CD14-positive monocyte (primary cell): ENCODE measurements at regions of chr16 and their contacts with region 1.

Region 1: DNA sequence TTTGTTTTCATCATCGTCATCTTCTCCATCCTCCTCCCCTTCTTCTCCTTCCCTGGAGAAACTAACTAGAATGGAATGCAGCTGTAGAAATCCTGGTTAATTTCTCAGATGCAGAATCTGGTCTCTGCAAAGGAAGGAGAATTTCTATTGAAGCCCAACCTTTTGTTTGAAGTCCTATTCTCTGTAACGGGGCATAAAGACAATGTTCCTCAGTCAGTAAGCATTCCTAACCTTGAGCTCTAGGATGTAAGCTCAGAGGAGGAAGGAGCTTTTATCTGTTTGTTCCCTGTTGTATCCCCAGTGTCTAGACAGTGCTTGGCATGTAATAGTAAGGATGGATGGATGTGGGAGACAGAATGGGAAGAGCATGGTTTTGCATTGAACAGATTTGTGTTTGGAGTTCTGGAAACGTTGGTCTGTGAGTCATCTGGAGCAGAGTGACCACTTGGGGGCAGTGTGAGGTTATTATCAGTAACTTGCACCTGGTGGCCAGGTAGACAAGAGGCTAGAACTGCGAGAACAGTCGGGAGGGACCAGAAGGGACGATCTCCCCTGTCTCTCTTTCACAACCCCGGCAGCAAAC is 363.7 kb downstream of the SNX29 start:
- DNase-seq: no peak
- H3K4me3 ChIP-seq: no peak overlapping the region
- H3K4me3 Mint-ChIP-seq: no peak overlapping the region
- H3K27ac ChIP-seq: no peak overlapping the region
- H3K27ac Mint-ChIP-seq: no peak overlapping the region
- H3K4me1 ChIP-seq: peaks cover 5 to 7% of the 10 kb centered on the region in 2 donors
- H3K4me1 Mint-ChIP-seq: peaks cover 12% of the 10 kb centered on the region
- H3K27me3 ChIP-seq: no peaks in the 10 kb centered on the region
- H3K27me3 Mint-ChIP-seq: peaks cover 0 to 1% (median 0%) of the 10 kb centered on the region in 3 donors
- CTCF ChIP-seq: peak; percentile 8

Region 2: DNA sequence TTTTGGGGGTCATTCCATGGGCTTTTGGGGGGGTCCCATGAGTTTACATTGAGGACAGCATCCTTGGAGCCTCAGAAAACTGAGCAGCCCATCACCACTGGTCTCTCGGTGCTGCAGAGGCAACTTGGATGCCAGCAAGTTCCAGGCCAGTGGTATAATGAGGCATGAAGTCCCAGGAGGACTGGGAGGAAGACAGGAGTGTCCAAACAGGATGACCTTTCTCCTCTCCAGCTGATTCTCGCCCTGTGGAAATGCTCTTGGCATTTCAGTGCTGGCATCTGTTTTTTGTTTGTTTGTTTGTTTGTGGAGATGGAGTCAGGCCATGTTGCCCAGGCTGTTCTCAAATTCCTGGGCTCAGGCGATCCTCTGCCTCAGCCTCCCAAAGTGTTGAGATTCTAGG is 16.1 kb before region 1 on chr16:
- intact Hi-C with region 1: loop called in 1 of 2 experiments (anchors 1 kb)
- DNase-seq: no peak
- H3K4me3 ChIP-seq: no peak overlapping the region
- H3K4me3 Mint-ChIP-seq: no peak overlapping the region
- H3K27ac ChIP-seq: no peak overlapping the region
- H3K27ac Mint-ChIP-seq: peak overlapping the region in 1 of 7 donors; percentile 34
- H3K4me1 ChIP-seq: no peaks in the 10 kb centered on the region
- H3K4me1 Mint-ChIP-seq: no peaks in the 10 kb centered on the region
- H3K27me3 ChIP-seq: no peaks in the 10 kb centered on the region
- H3K27me3 Mint-ChIP-seq: peaks cover 0 to 5% (median 0%) of the 10 kb centered on the region in 3 donors
- CTCF ChIP-seq: no peak